MCF 10A (cell line): ENCODE measurements at regions of chr12 and their contacts with region 1.

Region 1: DNA sequence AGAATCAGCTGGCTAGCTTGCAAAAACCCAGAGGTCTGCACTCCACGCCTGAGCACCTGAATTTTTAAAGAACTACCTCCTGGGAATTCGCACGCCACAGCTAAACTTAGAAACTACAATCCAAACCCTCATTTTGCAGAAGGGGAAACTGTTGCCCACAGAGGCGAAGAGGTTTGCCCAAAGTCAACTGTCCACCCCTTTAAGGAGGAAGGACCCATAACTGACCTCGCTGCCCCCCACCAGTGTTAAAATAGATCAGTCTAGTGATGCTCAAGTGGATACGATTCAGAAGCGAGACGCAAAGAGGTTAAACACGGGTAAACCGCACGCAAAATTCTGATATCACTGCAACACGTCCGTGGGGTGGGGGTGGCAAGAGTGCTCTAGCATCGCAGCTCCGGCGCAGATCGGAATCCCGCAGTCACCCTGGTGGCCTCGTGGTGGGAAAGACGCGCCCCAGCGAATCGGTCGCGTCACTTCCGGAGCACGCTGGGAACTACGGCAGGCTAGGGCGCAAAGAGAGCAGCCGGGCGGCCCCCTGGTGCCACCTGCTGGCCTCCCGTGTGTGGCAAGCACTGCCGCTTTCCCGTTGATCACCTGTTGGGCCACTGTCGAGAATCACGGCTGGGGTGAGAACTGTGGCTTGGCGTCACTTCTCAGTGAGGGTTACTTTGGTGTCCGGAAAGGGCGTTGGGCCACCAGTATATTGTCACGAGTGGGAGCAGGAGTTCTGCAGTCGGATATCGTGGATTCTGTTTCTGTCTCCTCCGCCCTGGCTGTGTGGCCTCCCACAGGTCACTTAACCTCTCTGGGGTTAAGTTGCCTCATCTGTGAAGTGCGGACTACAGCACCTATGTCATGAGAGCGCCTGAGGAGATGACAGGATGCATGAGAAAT is at the start of gene ALKBH2:
- DNase-seq: peak; percentile 90
- H3K4me3 Mint-ChIP-seq: peak within 1 kb of the TSS; percentile 83
- H3K27ac Mint-ChIP-seq: peak within 1 kb of the TSS; percentile 85
- H3K4me1 Mint-ChIP-seq: peaks cover 23% of the 10 kb centered on the region
- H3K27me3 Mint-ChIP-seq: no peaks in the 10 kb centered on the region
- CTCF ChIP-seq: peak; percentile 88
- total RNA-seq, gene ALKBH2: 38.9 and 48.9 TPM in 2 replicates

Region 2: GRCh38 chr12:107992870-107993451 is 1100.3 kb before region 1 on chr12:
- CTCF ChIA-PET with region 1: no interaction called
- POLR2A ChIA-PET with region 1: no interaction called
- intact Hi-C with region 1: loop called (anchors 5 kb)
- DNase-seq: peak; percentile 55
- H3K4me3 Mint-ChIP-seq: no peak overlapping the region
- H3K27ac Mint-ChIP-seq: no peak overlapping the region
- H3K4me1 Mint-ChIP-seq: no peaks in the 10 kb centered on the region
- H3K27me3 Mint-ChIP-seq: peaks cover 12% of the 10 kb centered on the region
- CTCF ChIP-seq: peak; percentile 39

Region 3: GRCh38 chr12:108816652-108817335 is 276.5 kb before region 1 on chr12:
- CTCF ChIA-PET with region 1: interaction called, 3 read pairs
- POLR2A ChIA-PET with region 1: interaction called, 3 read pairs
- intact Hi-C with region 1: loop called (anchors 1 kb)
- DNase-seq: peak; percentile 33
- H3K4me3 Mint-ChIP-seq: no peak overlapping the region
- H3K27ac Mint-ChIP-seq: peak overlapping the region; percentile 12
- H3K4me1 Mint-ChIP-seq: peaks cover 31% of the 10 kb centered on the region
- H3K27me3 Mint-ChIP-seq: no peaks in the 10 kb centered on the region
- CTCF ChIP-seq: no peak

Region 4: GRCh38 chr12:108950991-108951739 is 142.1 kb before region 1 on chr12:
- CTCF ChIA-PET with region 1: interaction called, 6 read pairs
- POLR2A ChIA-PET with region 1: no interaction called
- intact Hi-C with region 1: loop called (anchors 10 kb)
- DNase-seq: peak; percentile 79
- H3K4me3 Mint-ChIP-seq: no peak overlapping the region
- H3K27ac Mint-ChIP-seq: no peak overlapping the region
- H3K4me1 Mint-ChIP-seq: peaks cover 14% of the 10 kb centered on the region
- H3K27me3 Mint-ChIP-seq: peaks cover 2% of the 10 kb centered on the region
- CTCF ChIP-seq: peak; percentile 81

Region 5: GRCh38 chr12:108989376-108989775 is 103.9 kb before region 1 on chr12:
- CTCF ChIA-PET with region 1: no interaction called
- POLR2A ChIA-PET with region 1: no interaction called
- intact Hi-C with region 1: no loop called
- DNase-seq: no peak
- H3K4me3 Mint-ChIP-seq: no peak overlapping the region
- H3K27ac Mint-ChIP-seq: no peak overlapping the region
- H3K4me1 Mint-ChIP-seq: no peaks in the 10 kb centered on the region
- H3K27me3 Mint-ChIP-seq: peaks cover 7% of the 10 kb centered on the region
- CTCF ChIP-seq: no peak

Region 6: GRCh38 chr12:109385339-109386067 is 292.2 kb after region 1 on chr12:
- CTCF ChIA-PET with region 1: interaction called, 3 read pairs
- POLR2A ChIA-PET with region 1: interaction called, 4 read pairs
- intact Hi-C with region 1: loop called (anchors 1 kb)
- DNase-seq: peak; percentile 52
- H3K4me3 Mint-ChIP-seq: peak overlapping the region; percentile 41
- H3K27ac Mint-ChIP-seq: peak overlapping the region; percentile 86
- H3K4me1 Mint-ChIP-seq: peaks cover 11% of the 10 kb centered on the region
- H3K27me3 Mint-ChIP-seq: peaks cover 23% of the 10 kb centered on the region
- CTCF ChIP-seq: peak; percentile 67